ENCODE measurements at regions of chr2 and their contacts with region 1.

Region 1: GRCh38 chr2:26018176-26018716 is 15.6 kb upstream of the RAB10 start:
- H3K4me3 ChIP-seq: no peak overlapping the region
- H3K27ac ChIP-seq: no peak overlapping the region; the same call in 1 of the 2 replicates
- H3K4me1 ChIP-seq: peaks cover 13% of the 10 kb centered on the region
- CTCF ChIP-seq: no peak

Region 2: DNA sequence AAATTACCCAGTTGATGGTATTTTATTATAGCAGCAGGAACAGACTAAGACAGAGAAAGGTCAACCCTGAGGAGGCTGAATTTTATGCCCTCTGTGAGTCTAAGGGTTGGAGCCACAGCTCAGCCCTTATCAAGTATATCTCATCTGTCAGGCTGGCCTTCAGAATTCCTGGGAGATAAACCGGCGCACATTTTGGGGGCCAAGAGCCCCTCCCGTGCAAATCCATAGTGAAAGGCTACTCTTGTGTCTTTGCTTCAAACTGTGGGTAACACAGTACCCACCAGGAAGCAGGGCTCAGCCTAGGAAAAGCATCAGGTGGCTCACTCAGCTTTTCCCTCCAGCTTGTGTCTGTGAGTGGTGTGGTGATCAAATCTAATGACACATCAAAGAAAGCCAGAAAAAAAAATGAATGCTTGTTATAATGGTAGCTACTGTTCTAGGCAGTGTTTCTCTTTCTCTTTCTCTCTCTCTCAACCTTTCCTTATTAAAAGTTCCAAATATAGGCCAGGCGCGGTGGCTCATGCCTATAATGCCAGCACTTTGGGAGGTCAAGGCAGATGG is 115.0 kb before region 1 on chr2:
- CTCF ChIA-PET with region 1: no interaction called
- POLR2A ChIA-PET with region 1: no interaction called
- H3K4me3 ChIP-seq: no peak overlapping the region
- H3K27ac ChIP-seq: no peak overlapping the region
- H3K4me1 ChIP-seq: no peaks in the 10 kb centered on the region
- CTCF ChIP-seq: no peak

Region 3: DNA sequence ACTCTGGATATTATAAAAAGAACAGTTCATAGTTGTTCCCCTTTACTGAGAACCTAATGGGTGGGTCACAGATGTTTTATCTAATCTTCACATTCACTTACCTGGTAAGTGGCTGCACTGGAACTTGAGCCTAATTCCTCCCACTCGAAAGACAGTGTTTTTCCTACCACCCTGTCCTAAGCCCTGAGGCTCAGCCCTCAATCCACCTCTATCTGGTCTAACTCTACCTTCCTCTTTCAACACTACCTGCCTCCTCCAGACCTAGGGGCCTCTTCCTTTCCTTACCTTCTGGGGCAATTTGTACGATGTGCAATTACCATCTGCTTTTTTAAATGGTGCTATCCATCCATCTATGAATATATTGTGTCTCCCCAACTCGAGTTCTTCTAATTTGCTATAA is 26.3 kb before region 1 on chr2:
- CTCF ChIA-PET with region 1: interaction called, 10 read pairs
- POLR2A ChIA-PET with region 1: interaction called, 3 read pairs
- H3K4me3 ChIP-seq: no peak overlapping the region
- H3K27ac ChIP-seq: no peak overlapping the region
- H3K4me1 ChIP-seq: 0 out of 2 replicates have a peak, but pooled peaks cover 3% of the 10 kb centered on the region
- CTCF ChIP-seq: no peak

Region 4: DNA sequence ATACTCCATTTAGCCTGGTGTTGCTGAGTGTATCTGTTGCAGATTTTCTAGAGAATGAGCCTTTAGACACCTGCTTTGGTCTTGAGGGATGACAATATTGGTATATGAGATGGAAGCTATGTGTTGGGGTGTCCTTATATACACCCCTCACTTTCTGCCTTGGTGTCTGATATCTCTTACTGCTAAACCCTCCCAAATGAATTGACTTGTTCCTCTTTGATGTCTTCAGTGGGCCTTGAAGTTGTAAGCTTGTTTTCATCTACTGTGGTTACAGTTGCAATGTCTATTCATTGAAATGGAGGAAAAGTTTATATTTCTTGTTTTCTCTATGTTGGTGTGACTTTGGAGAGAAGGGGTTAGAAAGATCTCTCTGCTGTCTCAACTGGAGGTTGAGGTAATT is 34.5 kb after region 1 on chr2:
- CTCF ChIA-PET with region 1: no interaction called
- POLR2A ChIA-PET with region 1: no interaction called
- H3K4me3 ChIP-seq: no peak overlapping the region
- H3K27ac ChIP-seq: no peak overlapping the region
- H3K4me1 ChIP-seq: peaks cover 4% of the 10 kb centered on the region
- CTCF ChIP-seq: no peak

Region 5: DNA sequence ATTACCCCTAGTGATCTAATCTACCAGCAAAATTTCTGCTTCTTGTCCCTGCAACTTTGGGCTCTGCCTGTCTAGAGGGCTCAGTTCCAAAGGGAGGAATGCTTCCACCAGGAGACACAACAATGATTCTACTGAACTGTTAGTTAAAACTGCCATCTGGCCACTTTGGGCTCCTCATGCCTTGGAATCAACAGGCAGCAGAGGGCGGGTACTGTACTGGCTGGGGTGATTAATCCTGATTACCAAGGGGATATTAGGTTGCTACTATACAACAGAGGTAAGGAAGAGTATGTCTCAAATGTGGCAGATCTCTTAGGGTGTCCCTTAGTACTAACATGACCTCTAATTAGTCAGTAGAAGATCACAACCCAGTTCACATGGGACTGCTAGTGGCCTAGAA is 204.8 kb after region 1 on chr2:
- CTCF ChIA-PET with region 1: no interaction called
- POLR2A ChIA-PET with region 1: no interaction called
- H3K4me3 ChIP-seq: no peak overlapping the region
- H3K27ac ChIP-seq: no peak overlapping the region
- H3K4me1 ChIP-seq: no peaks in the 10 kb centered on the region
- CTCF ChIP-seq: no peak

Region 6: GRCh38 chr2:26887151-26887550 is 868.9 kb after region 1 on chr2:
- CTCF ChIA-PET with region 1: no interaction called
- POLR2A ChIA-PET with region 1: no interaction called
- H3K4me3 ChIP-seq: no peak overlapping the region
- H3K27ac ChIP-seq: no peak overlapping the region
- H3K4me1 ChIP-seq: no peaks in the 10 kb centered on the region
- CTCF ChIP-seq: no peak